ENCODE measurements at regions of chr12 and their contacts with region 1.

Region 1: DNA sequence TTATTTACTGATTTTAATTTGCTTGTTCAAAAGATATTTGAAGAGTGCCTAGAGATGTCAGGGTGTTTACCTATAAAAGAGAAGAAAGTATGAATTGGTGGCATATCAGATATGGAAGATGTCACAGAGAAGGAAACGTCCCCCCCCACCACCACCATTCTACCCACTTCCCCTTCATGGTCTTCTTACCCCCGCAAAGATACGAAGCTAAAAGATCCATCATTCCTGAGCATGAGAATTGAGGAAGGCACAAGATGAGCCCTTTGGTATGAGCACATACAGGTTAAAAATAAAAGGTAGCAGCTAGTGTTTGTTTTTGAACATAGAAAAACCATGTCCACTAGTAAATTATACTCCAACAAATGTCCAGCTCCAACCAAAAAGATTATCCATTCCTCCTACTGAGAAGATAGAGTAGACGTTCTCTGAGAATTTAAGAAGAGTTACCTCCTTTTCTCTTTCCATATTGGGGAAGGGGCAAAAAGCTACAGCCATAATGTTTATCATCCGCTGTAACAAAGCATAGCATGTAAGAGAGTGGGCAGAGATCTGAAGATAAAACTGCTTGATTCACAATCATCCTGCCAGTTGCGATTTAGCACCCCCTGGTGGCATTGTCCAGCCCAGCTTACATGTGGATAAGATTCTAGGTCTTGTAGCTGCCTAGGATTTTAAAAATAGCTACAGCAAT is 29.1 kb downstream of the NFYB start:
- DNase-seq: peak; percentile 25
- H3K4me3 ChIP-seq: no peak overlapping the region
- H3K27me3 ChIP-seq: no peaks in the 10 kb centered on the region
- CTCF ChIP-seq: peak; percentile 92

Region 2: DNA sequence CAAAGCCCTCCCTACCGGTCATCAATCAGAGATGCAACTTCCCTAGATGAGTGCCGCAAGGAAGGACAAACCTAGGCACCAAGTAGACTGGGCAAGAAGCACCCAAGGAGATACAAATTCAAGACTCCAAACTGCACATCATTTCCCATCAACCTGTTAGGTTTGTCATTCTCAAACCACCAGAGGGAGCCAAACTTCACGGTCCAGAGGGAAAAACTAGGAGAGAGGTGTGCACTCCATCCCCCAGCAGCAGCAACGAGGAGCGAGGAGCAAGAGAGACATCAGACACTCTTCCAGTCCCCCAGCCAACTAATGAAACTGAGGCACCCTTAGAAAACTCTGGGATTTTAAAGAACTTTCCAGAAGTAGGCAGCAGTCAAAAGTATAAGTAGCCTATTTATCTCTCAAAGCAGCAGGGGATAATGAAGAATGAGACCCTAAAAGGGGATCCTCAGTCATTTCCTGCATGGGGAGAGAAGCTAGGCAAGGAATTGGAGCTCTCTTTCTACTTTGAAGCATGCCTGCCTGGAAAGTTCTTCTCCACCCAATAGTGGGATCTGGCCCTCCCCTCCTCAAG is 230.9 kb before region 1 on chr12:
- CTCF ChIA-PET with region 1: interaction called, 30 read pairs
- POLR2A ChIA-PET with region 1: no interaction called
- DNase-seq: no peak
- H3K4me3 ChIP-seq: no peak overlapping the region
- H3K27me3 ChIP-seq: no peaks in the 10 kb centered on the region
- CTCF ChIP-seq: peak; percentile 77

Region 3: GRCh38 chr12:103884316-103884715 is 224.6 kb before region 1 on chr12:
- CTCF ChIA-PET with region 1: interaction called, 30 read pairs
- POLR2A ChIA-PET with region 1: no interaction called
- DNase-seq: no peak
- H3K4me3 ChIP-seq: no peak overlapping the region
- H3K27me3 ChIP-seq: no peaks in the 10 kb centered on the region
- CTCF ChIP-seq: peak; percentile 64

Region 4: GRCh38 chr12:104057771-104058197 is 51.1 kb before region 1 on chr12:
- CTCF ChIA-PET with region 1: interaction called, 21 read pairs
- POLR2A ChIA-PET with region 1: no interaction called
- DNase-seq: no peak
- H3K4me3 ChIP-seq: no peak overlapping the region
- H3K27me3 ChIP-seq: no peaks in the 10 kb centered on the region
- CTCF ChIP-seq: peak; percentile 77

Region 5: GRCh38 chr12:104090687-104091086 is 18.2 kb before region 1 on chr12:
- CTCF ChIA-PET with region 1: interaction called, 15 read pairs
- POLR2A ChIA-PET with region 1: no interaction called
- DNase-seq: no peak
- H3K4me3 ChIP-seq: no peak overlapping the region
- H3K27me3 ChIP-seq: no peaks in the 10 kb centered on the region
- CTCF ChIP-seq: no peak

Region 6: GRCh38 chr12:104097954-104098353 is 10.9 kb before region 1 on chr12:
- CTCF ChIA-PET with region 1: interaction called, 31 read pairs
- POLR2A ChIA-PET with region 1: no interaction called
- DNase-seq: no peak
- H3K4me3 ChIP-seq: no peak overlapping the region
- H3K27me3 ChIP-seq: no peaks in the 10 kb centered on the region
- CTCF ChIP-seq: no peak

Region 7: GRCh38 chr12:104121001-104121400 is 12.1 kb after region 1 on chr12:
- CTCF ChIA-PET with region 1: interaction called, 10 read pairs
- POLR2A ChIA-PET with region 1: no interaction called
- DNase-seq: peak; percentile 39
- H3K4me3 ChIP-seq: no peak overlapping the region
- H3K27me3 ChIP-seq: no peaks in the 10 kb centered on the region
- CTCF ChIP-seq: no peak

Region 8: DNA sequence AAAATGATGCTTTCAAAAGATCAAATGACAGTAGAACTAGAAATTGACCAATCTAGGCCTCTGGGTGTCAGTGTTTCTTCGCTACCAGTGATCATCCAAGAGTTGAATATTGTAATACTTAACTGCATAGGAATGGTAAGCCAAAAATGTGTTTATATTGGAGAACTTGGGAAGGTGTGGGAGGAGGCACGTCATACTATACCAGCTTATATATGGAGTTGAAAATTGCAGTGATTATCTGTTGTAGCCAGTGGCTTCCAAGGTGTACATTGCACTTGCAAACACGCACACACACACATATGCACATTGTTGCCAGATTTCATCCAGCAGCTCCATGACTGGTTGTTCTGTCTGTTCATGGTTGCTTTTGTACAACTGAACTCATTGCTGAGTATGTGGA is 230.8 kb after region 1 on chr12:
- CTCF ChIA-PET with region 1: no interaction called
- POLR2A ChIA-PET with region 1: no interaction called
- DNase-seq: no peak
- H3K4me3 ChIP-seq: no peak overlapping the region
- H3K27me3 ChIP-seq: no peaks in the 10 kb centered on the region
- CTCF ChIP-seq: no peak

Measured in BJ (cell line).